ENCODE measurements at regions of chr11 and their contacts with region 1.

Region 1: DNA sequence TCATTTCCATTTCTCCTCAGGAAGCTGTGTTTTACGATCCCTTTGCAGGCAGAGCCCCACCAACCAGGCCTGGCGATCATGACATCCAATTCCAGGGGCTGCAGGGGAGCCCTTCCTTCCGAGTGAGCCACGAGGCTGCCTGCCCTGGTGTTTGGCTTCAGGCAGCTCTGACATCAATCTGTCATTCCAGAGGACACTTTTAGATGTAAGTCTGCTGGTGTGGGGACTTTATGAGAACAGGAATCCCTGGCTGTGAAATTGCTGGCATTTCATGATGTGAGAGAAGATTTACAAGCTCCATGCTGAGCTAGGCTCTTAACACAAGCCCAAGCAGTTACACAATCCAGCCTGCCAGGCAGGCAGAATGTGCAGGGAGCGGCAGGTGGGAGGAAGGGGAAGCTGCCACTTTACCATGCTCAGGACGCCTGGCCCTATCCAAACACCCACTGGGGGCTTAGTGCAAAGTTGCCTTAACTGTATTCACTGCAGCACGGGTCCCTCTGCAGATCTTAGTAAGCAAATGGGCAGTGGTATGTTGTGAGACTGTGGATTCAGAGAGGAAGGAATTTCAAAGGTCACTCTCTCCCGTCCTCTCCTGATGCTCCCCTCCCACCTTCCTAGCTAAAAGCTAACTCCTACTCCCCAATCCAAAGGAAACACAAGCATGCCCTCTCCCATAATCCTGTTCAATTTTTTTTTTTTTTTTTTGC is 43.4 kb upstream of the MICAL2 start:
- DNase-seq: peak; percentile 76 to 81
- H3K4me3 ChIP-seq: no peak overlapping the region
- H3K4me3 Mint-ChIP-seq: peak overlapping the region; percentile 60
- H3K27ac Mint-ChIP-seq: peak overlapping the region; percentile 94
- H3K4me1 ChIP-seq: peaks cover 63% of the 10 kb centered on the region
- H3K4me1 Mint-ChIP-seq: peaks cover 38% of the 10 kb centered on the region
- H3K27me3 ChIP-seq: no peaks in the 10 kb centered on the region
- H3K27me3 Mint-ChIP-seq: no peaks in the 10 kb centered on the region
- CTCF ChIP-seq: no peak

Region 2: GRCh38 chr11:10899121-10899830 is 1167.7 kb before region 1 on chr11:
- CTCF ChIA-PET with region 1: no interaction called
- POLR2A ChIA-PET with region 1: interaction called, 12 read pairs
- intact Hi-C with region 1: no loop called
- DNase-seq: peak in 1 of 2 experiments; percentile 74
- H3K4me3 ChIP-seq: no peak overlapping the region
- H3K4me3 Mint-ChIP-seq: peak overlapping the region; percentile 55
- H3K27ac Mint-ChIP-seq: peak overlapping the region; percentile 86
- H3K4me1 ChIP-seq: peaks cover 39% of the 10 kb centered on the region
- H3K4me1 Mint-ChIP-seq: peaks cover 58% of the 10 kb centered on the region
- H3K27me3 ChIP-seq: no peaks in the 10 kb centered on the region
- H3K27me3 Mint-ChIP-seq: no peaks in the 10 kb centered on the region
- CTCF ChIP-seq: no peak

Region 3: DNA sequence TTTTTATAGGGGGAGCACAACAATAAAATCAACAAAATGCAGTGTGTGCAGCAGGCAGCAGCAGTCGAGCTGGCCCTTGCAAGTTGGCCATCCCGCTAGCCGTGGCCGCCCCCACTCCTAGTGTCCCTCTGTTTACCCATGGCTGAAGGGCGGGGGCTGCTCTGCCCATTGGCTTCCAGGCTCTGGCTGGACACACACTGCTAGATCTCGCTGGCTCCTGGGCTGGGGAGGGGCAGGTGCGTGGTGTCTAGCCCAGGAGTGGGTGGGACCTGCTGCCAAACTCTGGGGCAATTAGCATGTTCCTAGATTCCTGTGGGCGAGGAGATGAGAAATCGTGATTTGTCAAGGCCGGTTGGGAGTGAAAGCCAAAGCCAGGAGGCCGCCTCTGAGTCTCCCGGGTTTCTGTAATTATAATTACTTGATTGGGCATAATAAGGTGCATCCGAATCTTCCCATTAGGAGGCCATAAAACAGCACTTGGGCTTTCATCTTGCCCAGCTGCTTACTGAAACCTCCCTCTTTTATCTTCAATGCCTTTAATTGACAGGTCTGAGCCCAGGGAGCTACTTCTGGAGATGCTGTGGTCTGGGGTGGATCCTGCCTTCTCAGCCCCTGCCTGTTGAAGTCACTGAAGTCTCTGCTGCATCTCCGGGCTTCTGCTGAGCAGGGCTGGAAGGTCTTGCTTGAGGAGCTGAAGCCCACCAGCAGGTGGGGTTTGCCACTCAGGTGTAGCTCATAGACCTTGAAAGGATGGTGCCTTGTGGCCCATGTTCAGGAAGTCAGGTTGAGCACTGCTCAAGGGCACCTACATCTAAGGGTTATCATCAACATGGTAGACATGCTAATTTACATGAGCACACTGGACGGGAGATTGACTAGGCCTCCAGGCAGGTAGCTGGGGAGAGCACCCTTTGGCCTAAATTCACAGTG is 14.0 kb before region 1 on chr11:
- CTCF ChIA-PET with region 1: interaction called, 5 read pairs
- POLR2A ChIA-PET with region 1: no interaction called
- intact Hi-C with region 1: loop called (anchors 2 kb)
- DNase-seq: peak; percentile 49 to 66
- H3K4me3 ChIP-seq: no peak overlapping the region
- H3K4me3 Mint-ChIP-seq: no peak overlapping the region
- H3K27ac Mint-ChIP-seq: peak overlapping the region; percentile 49
- H3K4me1 ChIP-seq: peaks cover 14% of the 10 kb centered on the region
- H3K4me1 Mint-ChIP-seq: peaks cover 34% of the 10 kb centered on the region
- H3K27me3 ChIP-seq: no peaks in the 10 kb centered on the region
- H3K27me3 Mint-ChIP-seq: no peaks in the 10 kb centered on the region
- CTCF ChIP-seq: peak in 1 of 2 experiments; percentile 31

Region 4: DNA sequence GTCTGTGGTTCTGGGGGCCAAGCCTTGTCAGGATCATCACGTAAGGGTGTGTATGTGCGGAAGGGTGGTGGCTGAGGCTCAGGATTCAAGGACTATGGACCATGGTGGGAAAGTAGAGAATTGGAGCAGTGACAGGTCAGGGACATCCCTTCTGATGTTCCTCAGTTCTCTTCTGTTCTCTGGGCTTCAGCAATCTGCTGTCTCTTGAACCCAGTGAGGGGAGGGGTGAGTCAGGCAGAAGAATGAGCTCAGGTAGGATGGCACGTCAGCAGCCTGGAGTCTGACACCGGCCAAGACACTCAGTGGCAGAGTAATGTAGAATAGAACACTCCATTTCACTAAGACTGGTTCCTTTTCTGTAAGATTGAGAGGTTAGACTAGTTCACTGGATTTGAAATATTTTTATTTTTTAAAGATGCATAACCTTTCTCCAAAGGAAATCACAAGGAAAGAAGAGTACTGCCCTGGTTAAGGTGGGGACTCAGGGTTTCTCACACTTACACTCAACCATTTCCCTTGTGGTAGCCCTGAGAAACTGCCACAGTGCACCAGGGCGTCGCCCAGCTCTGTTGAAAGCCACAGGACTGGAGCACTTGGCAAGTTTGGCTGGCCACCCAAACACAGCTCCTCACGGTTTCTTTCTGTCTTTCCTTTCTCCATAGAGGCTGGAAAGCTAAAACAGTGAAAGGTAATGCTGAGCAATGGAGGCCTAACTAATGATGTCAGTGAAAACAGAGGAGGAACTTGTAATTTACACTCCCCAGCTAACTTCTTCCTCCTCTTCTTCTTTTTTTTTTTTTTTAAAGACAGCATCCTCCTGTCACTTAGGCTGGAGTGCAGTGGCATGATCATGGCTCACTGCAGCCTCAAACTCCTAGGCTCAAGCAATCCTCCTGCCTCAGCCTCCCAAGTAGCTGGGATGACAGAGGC is 20.4 kb after region 1 on chr11:
- CTCF ChIA-PET with region 1: interaction called, 21 read pairs
- POLR2A ChIA-PET with region 1: interaction called, 13 read pairs
- intact Hi-C with region 1: loop called (anchors 1 kb)
- DNase-seq: peak; percentile 34 to 42
- H3K4me3 ChIP-seq: no peak overlapping the region
- H3K4me3 Mint-ChIP-seq: no peak overlapping the region
- H3K27ac Mint-ChIP-seq: peak overlapping the region; percentile 78
- H3K4me1 ChIP-seq: peaks cover 73% of the 10 kb centered on the region
- H3K4me1 Mint-ChIP-seq: peaks cover 60% of the 10 kb centered on the region
- H3K27me3 ChIP-seq: no peaks in the 10 kb centered on the region
- H3K27me3 Mint-ChIP-seq: no peaks in the 10 kb centered on the region
- CTCF ChIP-seq: peak; percentile 7 to 11

Region 5: DNA sequence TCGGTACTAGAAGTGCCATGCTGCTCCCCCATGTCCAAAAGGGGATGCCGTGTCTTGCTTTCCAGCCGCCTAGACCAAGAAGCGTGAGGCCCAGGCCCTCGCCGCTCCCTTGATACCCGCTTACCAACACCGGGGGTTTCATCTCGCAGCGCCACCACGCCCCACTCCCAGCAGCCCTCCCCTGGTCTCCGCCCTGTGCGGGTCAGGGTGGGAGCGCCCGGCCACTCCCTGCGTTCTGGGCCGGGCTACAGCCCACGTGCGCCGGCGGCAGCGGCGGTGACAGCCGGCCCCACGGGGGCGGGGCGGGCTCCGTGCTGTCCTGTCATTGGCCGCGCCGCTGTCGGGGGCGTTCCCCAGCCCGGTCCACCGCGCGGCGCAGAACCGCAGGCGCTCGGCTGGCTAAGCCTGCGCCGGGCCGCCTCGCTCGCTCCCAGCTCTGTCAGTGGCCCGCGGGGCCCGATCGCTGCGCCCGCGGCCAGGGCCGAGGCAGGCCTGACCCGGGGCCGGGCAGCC is 43.3 kb after region 1 on chr11 and contains the start of gene MICAL2:
- CTCF ChIA-PET with region 1: interaction called, 4 read pairs
- POLR2A ChIA-PET with region 1: interaction called, 3 read pairs
- intact Hi-C with region 1: loop called (anchors 2 kb)
- DNase-seq: peak; percentile 90 to 96
- H3K4me3 ChIP-seq: peak within 1 kb of the TSS; percentile 61
- H3K4me3 Mint-ChIP-seq: peak within 1 kb of the TSS; percentile 83
- H3K27ac Mint-ChIP-seq: peak within 1 kb of the TSS; percentile 83
- H3K4me1 ChIP-seq: peaks cover 39% of the 10 kb centered on the region
- H3K4me1 Mint-ChIP-seq: peaks cover 38% of the 10 kb centered on the region
- H3K27me3 ChIP-seq: no peaks in the 10 kb centered on the region
- H3K27me3 Mint-ChIP-seq: no peaks in the 10 kb centered on the region
- CTCF ChIP-seq: no peak
- total RNA-seq, gene MICAL2: 247 and 272 TPM in 2 replicates

Region 6: DNA sequence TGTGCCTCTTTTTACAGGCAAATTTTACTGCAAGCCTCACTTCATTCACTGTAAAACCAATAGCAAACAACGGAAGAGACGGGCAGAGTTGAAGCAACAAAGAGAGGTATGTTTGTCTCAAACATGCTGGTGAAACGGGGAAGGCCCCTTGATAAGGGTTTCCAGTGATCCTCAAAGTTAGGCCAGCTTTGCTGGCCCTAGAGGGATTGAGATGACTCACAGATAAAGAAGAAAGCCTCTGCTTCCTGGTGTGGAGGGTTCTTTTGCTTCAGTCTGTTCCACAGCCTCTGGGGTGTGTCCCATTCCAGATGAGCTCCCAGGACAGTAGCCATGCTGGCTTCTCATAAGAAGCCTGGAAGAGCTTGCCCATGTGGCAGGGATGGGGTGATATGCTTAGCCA is 191.5 kb after region 1 on chr11:
- CTCF ChIA-PET with region 1: no interaction called
- POLR2A ChIA-PET with region 1: no interaction called
- intact Hi-C with region 1: loop called (anchors 1 kb)
- DNase-seq: peak; percentile 85 to 86
- H3K4me3 ChIP-seq: no peak overlapping the region
- H3K4me3 Mint-ChIP-seq: peak overlapping the region; percentile 42
- H3K27ac Mint-ChIP-seq: peak overlapping the region; percentile 96
- H3K4me1 ChIP-seq: peaks cover 67% of the 10 kb centered on the region
- H3K4me1 Mint-ChIP-seq: peaks cover 70% of the 10 kb centered on the region
- H3K27me3 ChIP-seq: no peaks in the 10 kb centered on the region
- H3K27me3 Mint-ChIP-seq: no peaks in the 10 kb centered on the region
- CTCF ChIP-seq: no peak

Measured in Caco-2 (cell line).